H1 (cell line): ENCODE measurements at regions of chr5 and their contacts with region 1.

Region 1: DNA sequence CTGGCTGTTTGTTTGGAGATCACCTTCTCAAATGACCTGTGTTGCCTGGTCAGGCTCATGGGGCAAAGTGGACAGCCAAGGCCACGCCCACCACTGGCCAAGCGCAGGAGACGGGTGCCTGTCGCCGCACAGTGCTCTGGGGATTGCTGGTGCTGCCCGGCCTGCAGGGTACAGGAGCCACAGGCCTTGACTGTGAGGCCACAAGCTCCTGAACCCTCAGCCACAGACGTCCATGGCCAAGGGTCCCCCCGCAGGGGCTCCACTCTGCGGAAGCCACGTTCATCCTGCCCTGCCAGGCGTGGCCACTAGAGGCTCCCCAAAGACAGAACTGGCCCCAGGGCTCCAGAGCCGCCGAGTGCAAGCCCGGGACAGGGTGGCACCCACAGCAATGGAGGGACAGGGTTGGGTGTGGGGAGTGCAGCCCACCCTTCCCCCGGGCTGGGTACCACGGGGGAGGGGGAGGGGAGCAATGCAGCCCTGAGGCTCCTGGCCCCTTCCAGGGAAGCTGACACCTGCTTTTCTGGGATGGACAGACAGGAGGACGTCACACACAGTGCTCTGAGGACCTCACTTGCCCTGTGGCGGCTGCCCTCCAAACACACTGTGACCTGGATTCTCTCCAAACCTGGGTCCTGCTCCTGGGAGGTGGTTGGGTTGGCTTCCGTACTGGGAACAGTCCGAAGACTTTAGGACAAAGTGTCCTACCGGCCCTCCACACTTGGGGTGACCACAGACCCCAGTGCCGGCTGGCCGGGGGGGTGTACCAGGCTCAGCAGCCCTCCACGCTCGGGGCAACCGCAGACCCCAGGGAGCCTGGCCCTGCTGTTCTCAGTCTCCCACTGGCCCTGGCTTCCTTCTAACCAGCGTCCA is 21.5 kb downstream of the TPPP start:
- DNase-seq: peak in 1 of 2 experiments; percentile 90
- H3K4me3 ChIP-seq: no peak overlapping the region
- H3K27ac ChIP-seq: peak overlapping the region; percentile 38; the same call in 1 of the 2 replicates
- H3K4me1 ChIP-seq: peaks cover 0 to 21% (median 10%) of the 10 kb centered on the region in 4 experiments; a peak in 6 of 7 replicates
- H3K27me3 ChIP-seq: peaks cover 0 to 12% (median 5%) of the 10 kb centered on the region in 4 experiments; a peak in 3 of 7 replicates
- CTCF ChIP-seq: peak in 2 of 3 experiments; percentile 88 to 94; a peak in 3 of 4 replicates
- EP300 ChIP-seq: no peak
- POLR2A ChIP-seq: no peak; a peak in 1 of 3 replicates
- RAD21 ChIP-seq: peak; percentile 86 to 93

Region 2: DNA sequence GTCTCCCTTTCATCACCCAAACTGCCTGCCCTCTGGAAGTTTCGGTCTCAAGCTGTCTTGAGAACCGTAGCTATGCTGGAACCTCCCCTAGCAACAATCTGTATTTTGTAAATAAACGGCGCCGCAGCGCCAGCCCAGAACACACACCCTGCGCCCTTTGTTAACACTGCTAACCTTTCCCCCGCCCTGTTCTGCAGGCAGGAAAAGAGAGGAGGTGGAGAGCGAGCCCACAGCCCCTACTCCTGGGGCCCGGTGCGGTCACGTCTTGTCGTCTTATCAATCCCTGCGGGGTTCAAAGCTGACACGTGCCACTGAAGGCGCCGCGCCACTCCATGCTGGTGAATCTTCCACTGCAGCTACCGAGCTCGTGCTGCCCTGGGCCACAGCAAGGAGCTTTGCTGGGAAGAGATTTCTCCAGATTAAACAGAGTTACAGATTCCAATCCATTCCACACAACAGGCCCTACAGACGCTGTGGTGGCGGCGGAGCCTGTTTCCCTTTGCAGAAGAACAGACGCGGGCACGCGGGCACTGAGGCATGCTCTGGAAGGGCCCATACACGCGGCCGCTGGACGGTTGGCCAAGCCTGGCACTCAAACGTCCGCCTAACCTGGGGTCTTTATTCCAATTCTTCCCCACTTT is 87.5 kb after region 1 on chr5:
- CTCF ChIA-PET with region 1: interaction called, 29 read pairs
- POLR2A ChIA-PET with region 1: no interaction called
- DNase-seq: no peak
- H3K4me3 ChIP-seq: no peak overlapping the region
- H3K27ac ChIP-seq: 0 out of 2 replicates have a peak overlapping the region, but pooled peaks have one; percentile 8
- H3K4me1 ChIP-seq: no peaks in the 10 kb centered on the region; a peak in 1 of 7 replicates
- H3K27me3 ChIP-seq: no peaks in the 10 kb centered on the region; a peak in 1 of 7 replicates
- CTCF ChIP-seq: no peak
- EP300 ChIP-seq: no peak
- POLR2A ChIP-seq: no peak
- RAD21 ChIP-seq: no peak

Region 3: GRCh38 chr5:902129-902916 is 230.6 kb after region 1 on chr5:
- CTCF ChIA-PET with region 1: interaction called, 23 read pairs
- POLR2A ChIA-PET with region 1: no interaction called
- DNase-seq: no peak
- H3K4me3 ChIP-seq: no peak overlapping the region
- H3K27ac ChIP-seq: no peak overlapping the region
- H3K4me1 ChIP-seq: no peaks in the 10 kb centered on the region
- H3K27me3 ChIP-seq: no peaks in the 10 kb centered on the region
- CTCF ChIP-seq: no peak
- EP300 ChIP-seq: no peak
- POLR2A ChIP-seq: no peak
- RAD21 ChIP-seq: no peak